H1 (cell line): ENCODE measurements at regions of chr13 and their contacts with region 1.

Region 1: DNA sequence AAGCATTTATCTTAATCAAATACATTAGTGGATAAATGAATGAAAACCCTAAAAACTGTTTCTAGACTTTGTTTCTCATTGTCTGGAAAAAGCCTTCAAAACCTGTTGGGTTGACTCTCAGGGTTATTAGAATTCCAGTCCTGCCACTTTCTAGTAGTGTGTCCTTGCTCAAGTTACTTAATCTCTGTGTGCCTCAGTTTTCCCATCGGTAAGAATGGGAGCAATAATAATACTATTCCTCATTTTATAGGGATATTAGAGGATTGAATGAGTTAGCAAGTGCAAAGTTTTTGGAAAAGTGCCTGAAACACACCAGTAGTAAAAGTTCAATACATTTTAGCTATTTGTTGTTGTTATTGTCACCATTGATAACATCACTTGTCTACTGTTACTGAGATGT is 2.9 kb downstream of the URAD start:
- DNase-seq: no peak
- H3K4me3 ChIP-seq: no peak overlapping the region
- H3K27ac ChIP-seq: no peak overlapping the region
- H3K4me1 ChIP-seq: no peaks in the 10 kb centered on the region
- H3K27me3 ChIP-seq: peaks cover 30 to 51% (median 46%) of the 10 kb centered on the region in 4 experiments
- CTCF ChIP-seq: no peak
- EP300 ChIP-seq: no peak
- POLR2A ChIP-seq: no peak
- RAD21 ChIP-seq: no peak

Region 2: DNA sequence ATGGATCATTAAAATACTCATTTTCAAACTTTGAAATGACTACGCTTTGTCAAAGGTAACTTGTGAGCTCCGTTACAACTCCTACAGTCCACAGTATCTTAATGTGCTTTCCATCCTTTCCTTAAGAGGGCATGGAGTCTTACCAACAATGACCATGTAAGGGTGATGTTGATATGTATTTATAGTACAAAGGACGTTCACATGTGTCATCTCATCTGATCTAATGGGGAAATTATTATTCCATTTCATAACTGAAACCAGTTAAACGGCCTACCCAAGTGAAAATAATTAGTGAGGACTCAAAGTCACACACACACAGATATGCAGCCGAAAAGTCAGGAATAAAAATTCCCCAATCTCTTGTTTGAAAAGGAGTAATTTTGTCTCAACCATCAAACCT is 823.6 kb before region 1 on chr13:
- CTCF ChIA-PET with region 1: no interaction called
- POLR2A ChIA-PET with region 1: no interaction called
- DNase-seq: no peak
- H3K4me3 ChIP-seq: no peak overlapping the region
- H3K27ac ChIP-seq: no peak overlapping the region
- H3K4me1 ChIP-seq: peaks cover 0 to 24% (median 9%) of the 10 kb centered on the region in 4 experiments; a peak in 5 of 7 replicates
- H3K27me3 ChIP-seq: no peaks in the 10 kb centered on the region
- CTCF ChIP-seq: no peak
- EP300 ChIP-seq: no peak
- POLR2A ChIP-seq: no peak
- RAD21 ChIP-seq: no peak

Region 3: DNA sequence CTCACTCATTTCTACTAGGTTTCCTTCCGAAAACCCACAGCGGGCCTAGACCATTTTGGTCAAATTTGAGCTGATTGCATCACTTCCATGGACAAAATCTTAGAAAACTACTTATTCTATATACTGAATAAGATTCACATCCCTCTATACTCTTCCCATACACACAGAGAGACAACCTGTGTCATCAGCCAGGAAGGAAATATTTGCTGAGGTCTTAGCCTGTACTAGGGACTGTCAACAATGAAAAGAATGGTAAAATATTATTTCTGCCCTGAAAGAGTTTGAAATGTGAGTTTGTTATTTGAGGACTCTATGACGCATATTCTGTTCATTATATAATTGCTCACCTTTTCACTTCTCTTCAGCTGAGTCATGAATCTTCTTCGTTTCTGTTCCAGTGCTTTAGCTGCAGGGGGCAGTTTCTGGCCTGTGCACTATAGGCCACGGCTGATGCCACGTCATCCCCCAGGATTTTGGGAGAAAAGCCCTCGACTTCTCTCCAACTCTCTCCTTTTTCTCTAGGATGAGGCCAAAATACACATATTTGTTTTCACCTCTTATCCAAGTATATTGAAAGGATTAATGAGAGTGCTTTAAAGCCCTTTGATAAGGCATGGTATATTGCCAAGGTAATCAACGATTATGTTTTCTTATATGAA is 145.7 kb before region 1 on chr13:
- CTCF ChIA-PET with region 1: no interaction called
- POLR2A ChIA-PET with region 1: no interaction called
- DNase-seq: no peak
- H3K4me3 ChIP-seq: no peak overlapping the region
- H3K27ac ChIP-seq: no peak overlapping the region
- H3K4me1 ChIP-seq: no peaks in the 10 kb centered on the region
- H3K27me3 ChIP-seq: no peaks in the 10 kb centered on the region
- CTCF ChIP-seq: no peak
- EP300 ChIP-seq: no peak
- POLR2A ChIP-seq: no peak
- RAD21 ChIP-seq: no peak

Region 4: GRCh38 chr13:27997904-27998522 is 12.4 kb after region 1 on chr13:
- CTCF ChIA-PET with region 1: interaction called, 19 read pairs
- POLR2A ChIA-PET with region 1: no interaction called
- DNase-seq: peak in 1 of 2 experiments; percentile 64
- H3K4me3 ChIP-seq: no peak overlapping the region
- H3K27ac ChIP-seq: no peak overlapping the region
- H3K4me1 ChIP-seq: peaks cover 0 to 8% (median 5%) of the 10 kb centered on the region in 4 experiments; a peak in 4 of 7 replicates
- H3K27me3 ChIP-seq: no peaks in the 10 kb centered on the region
- CTCF ChIP-seq: peak; percentile 51 to 68 (median 67)
- EP300 ChIP-seq: no peak
- POLR2A ChIP-seq: no peak
- RAD21 ChIP-seq: peak; percentile 74 to 80